A549 (cell line): ENCODE measurements at regions of chr5 and their contacts with region 1.

Region 1: DNA sequence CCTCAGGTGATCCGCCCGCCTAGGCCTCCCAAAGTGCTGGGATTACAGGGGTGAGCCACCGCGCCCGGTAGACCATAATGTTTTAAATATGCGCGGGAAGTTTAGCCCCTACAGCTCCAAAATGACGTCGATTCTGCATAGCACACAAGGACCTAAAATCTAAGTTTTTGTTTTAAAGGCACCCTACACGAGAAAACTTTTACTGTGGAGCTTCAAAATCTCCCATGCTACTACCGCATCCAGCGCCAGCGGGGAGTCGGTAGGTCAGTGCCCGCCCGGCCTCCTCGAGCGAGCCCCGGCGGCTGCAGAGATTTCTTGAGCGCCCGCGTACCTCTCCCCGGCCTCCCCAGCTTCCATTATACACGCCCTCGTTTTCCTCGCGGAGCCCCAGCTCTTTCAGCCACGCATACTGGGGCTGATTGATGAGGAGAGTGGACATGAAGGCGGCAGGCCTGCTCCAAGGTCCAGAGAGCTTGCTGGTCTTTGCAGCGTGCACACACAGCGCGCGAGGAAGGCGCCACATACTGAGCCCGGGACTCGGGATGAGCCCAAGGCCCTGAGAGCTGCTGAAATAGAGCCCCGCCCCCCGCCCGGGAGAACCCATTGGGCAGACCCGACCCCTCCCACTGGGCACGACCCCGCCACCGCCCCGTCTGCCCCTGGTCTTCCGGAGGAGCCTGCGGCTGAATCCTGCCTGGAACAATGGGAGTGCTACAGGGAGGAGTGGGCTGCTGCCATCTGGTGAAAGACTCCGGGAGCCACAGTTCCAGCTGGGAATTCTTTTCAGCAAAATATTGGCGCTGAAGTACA is at the start of gene ALDH7A1:
- DNase-seq: peak; percentile 96 to 97
- ATAC-seq: peak; percentile 98
- H3K4me3 ChIP-seq: peak within 1 kb of the TSS; percentile 54
- H3K27ac ChIP-seq: peak within 1 kb of the TSS; percentile 77 to 88
- H3K4me1 ChIP-seq: peaks cover 20% of the 10 kb centered on the region
- CTCF ChIP-seq: peak; percentile 68
- EP300 ChIP-seq: no peak
- POLR2A ChIP-seq: peak; percentile 99
- RAD21 ChIP-seq: peak; percentile 52 to 62
- polyA plus RNA-seq, gene ALDH7A1: 78.3 and 99.2 TPM in 2 replicates

Region 2: GRCh38 chr5:126544087-126544740 is 50.7 kb before region 1 on chr5:
- CTCF ChIA-PET with region 1: interaction called, 18 read pairs
- POLR2A ChIA-PET with region 1: no interaction called
- DNase-seq: peak; percentile 46 to 58
- ATAC-seq: peak; percentile 83 to 88
- H3K4me3 ChIP-seq: no peak overlapping the region
- H3K27ac ChIP-seq: no peak overlapping the region
- H3K4me1 ChIP-seq: no peaks in the 10 kb centered on the region
- CTCF ChIP-seq: peak; percentile 54
- EP300 ChIP-seq: no peak
- POLR2A ChIP-seq: no peak
- RAD21 ChIP-seq: peak; percentile 35 to 49; a peak in 3 of 5 replicates

Region 3: DNA sequence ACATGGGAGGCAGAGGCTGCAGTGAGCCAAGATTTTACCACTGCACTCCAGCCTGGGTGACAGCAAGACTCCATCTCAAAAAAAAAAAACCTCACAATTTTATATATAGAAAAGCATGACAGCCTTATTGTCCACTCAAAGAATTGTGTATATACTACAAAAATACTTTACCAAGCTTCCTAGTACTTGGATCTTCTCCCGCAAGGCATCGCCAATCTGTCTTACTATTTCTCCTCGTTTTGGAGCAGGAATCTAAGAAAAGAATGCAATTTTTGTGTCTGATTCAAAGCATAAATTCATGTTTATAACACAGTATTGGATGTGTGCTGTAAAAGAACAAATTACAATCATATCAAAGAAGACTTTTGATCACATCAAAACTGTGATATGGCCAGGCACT is 11.1 kb before region 1 on chr5:
- CTCF ChIA-PET with region 1: interaction called, 30 read pairs
- POLR2A ChIA-PET with region 1: interaction called, 7 read pairs
- DNase-seq: no peak
- ATAC-seq: no peak
- H3K4me3 ChIP-seq: no peak overlapping the region
- H3K27ac ChIP-seq: no peak overlapping the region
- H3K4me1 ChIP-seq: no peaks in the 10 kb centered on the region
- CTCF ChIP-seq: no peak
- EP300 ChIP-seq: no peak
- POLR2A ChIP-seq: no peak
- RAD21 ChIP-seq: no peak